ENCODE measurements at regions of chr18 and their contacts with region 1.

Region 1: GRCh38 chr18:77000527-77000926 is 132.1 kb downstream of the MBP start:
- DNase-seq: peak in 1 of 2 experiments; percentile 81
- H3K4me3 ChIP-seq: no peak overlapping the region
- H3K27ac ChIP-seq: no peak overlapping the region
- H3K4me1 ChIP-seq: no peaks in the 10 kb centered on the region
- H3K27me3 ChIP-seq: no peaks in the 10 kb centered on the region; a peak in 1 of 7 replicates
- CTCF ChIP-seq: peak; percentile 86 to 89 (median 86)
- EP300 ChIP-seq: no peak
- POLR2A ChIP-seq: no peak
- RAD21 ChIP-seq: peak; percentile 83 to 87

Region 2: DNA sequence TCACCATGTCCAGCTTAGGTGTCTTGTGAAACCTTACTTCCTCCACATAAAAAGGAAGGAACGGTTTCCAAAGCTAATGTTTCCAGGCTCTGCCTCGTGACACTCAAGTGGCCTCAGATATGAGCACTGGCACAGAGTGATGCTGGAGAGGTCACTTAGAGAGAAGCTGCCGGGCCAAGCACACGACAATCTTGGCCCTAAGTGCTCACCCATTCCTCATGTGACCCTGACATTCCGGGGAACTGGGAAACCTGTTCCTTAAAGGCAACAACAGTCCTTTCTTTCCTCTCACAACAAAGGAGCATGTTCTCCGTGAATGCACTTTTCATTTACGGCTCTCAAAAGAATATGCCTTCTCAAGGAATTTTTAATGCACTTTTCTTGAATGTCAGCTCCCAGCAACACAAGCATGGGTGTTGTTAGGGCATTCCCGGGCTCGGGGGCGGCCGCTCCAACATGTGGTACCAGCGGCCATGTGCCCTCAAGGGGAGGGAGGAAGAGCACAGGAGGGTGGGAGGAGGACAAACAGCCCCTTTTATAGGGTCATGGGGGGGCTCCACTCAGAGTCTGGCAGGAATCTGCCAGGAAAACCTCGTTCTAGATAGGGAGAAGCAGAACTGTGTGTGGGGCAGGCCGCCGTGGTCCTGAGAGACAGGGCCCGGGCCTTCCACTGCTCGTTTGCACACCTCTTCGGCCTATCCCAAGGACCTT is 13.4 kb after region 1 on chr18:
- CTCF ChIA-PET with region 1: interaction called, 33 read pairs
- POLR2A ChIA-PET with region 1: no interaction called
- DNase-seq: no peak
- H3K4me3 ChIP-seq: no peak overlapping the region
- H3K27ac ChIP-seq: no peak overlapping the region
- H3K4me1 ChIP-seq: peaks cover 0 to 4% (median 3%) of the 10 kb centered on the region in 4 experiments; a peak in 2 of 7 replicates
- H3K27me3 ChIP-seq: no peaks in the 10 kb centered on the region
- CTCF ChIP-seq: no peak
- EP300 ChIP-seq: no peak
- POLR2A ChIP-seq: no peak
- RAD21 ChIP-seq: no peak

Region 3: DNA sequence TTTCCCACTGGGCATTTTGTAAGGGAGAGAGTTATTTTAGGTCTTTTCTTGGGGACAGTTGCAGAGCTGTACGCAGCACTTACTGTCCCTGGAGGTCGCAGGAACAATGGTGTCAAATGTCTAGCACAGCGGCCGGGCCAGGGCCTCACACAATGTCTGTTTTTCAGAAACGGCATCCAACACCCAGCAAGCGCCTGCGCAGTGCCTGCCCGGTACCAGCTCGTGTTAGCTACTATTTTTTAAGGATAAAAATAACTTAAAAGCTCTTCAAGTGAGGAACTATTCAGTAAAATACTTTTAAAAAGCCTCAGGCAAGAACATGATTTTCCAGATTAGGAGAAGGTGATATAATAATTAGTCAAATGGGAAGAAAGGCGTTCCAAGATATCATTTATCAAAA is 42.1 kb after region 1 on chr18:
- CTCF ChIA-PET with region 1: interaction called, 12 read pairs
- POLR2A ChIA-PET with region 1: no interaction called
- DNase-seq: no peak
- H3K4me3 ChIP-seq: no peak overlapping the region
- H3K27ac ChIP-seq: no peak overlapping the region
- H3K4me1 ChIP-seq: no peaks in the 10 kb centered on the region; a peak in 1 of 7 replicates
- H3K27me3 ChIP-seq: no peaks in the 10 kb centered on the region
- CTCF ChIP-seq: no peak
- EP300 ChIP-seq: no peak
- POLR2A ChIP-seq: no peak
- RAD21 ChIP-seq: no peak

Region 4: GRCh38 chr18:77061946-77062517 is 61.5 kb after region 1 on chr18:
- CTCF ChIA-PET with region 1: interaction called, 31 read pairs
- POLR2A ChIA-PET with region 1: interaction called, 3 read pairs
- DNase-seq: no peak
- H3K4me3 ChIP-seq: no peak overlapping the region
- H3K27ac ChIP-seq: no peak overlapping the region
- H3K4me1 ChIP-seq: peaks cover 1 to 11% (median 6%) of the 10 kb centered on the region in 4 experiments; a peak in 6 of 7 replicates
- H3K27me3 ChIP-seq: no peaks in the 10 kb centered on the region
- CTCF ChIP-seq: peak; percentile 41 to 71 (median 54)
- EP300 ChIP-seq: no peak
- POLR2A ChIP-seq: no peak
- RAD21 ChIP-seq: peak; percentile 68 to 77

Measured in H1 (cell line).